Lower lobe of right lung (tissue), 2 donors: ENCODE measurements at regions of chr16 and their contacts with region 1.

Region 1: DNA sequence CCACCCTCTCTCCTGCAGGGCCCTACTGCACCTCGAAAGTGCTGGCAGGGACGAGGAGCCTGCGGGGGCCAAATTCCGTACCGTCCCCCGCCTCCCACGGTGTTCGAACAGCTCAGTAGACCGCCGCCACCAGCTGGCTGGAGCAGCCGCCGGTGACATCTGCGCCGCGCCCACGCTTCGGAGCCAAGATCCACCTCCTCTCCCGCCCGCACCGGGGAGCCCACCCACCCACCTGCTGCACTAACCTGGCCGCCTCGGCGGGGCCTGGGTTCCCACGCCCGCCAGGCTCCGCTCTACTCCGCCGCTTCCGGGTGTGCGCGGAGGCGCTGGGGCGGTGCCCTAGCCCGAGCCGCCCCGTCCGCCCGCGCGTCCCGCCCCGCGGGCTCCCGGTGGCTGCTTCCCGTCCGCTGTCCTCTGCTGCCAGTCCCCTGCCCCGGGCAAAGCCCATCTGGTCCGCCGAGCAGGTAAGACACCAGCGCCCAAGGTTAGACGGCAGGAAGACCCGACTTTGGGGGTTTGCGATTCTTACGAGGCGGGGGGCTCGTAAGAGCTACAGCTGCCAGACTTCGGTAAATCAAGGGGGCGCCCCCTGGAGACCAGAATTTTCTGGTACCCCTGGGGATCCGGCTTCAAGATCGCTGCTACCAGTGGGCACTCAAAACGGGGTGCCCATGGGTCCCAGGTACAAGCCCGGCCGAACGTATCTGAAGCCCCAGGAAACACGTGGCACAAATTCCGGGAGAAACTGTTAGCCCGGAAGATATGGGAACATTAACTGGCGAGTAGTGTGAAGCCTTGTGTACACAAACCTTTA is at the starts of genes FBXL8 and TRADD:
- DNase-seq: peak; percentile 89
- ATAC-seq: peak; percentile 87 to 89
- H3K4me3 ChIP-seq: peak within 1 kb of the TSS; percentile 94
- H3K27ac ChIP-seq: peak within 1 kb of the TSS; percentile 87
- H3K4me1 ChIP-seq: peaks cover 58% of the 10 kb centered on the region
- H3K27me3 ChIP-seq: peaks cover 21% of the 10 kb centered on the region
- CTCF ChIP-seq: no peak
- total RNA-seq, gene FBXL8: 32.9 TPM
- total RNA-seq, gene TRADD: 28.4 TPM

Region 2: GRCh38 chr16:66798161-66798560 is 361.6 kb before region 1 on chr16:
- intact Hi-C with region 1: no loop called
- DNase-seq: no peak
- ATAC-seq: no peak
- H3K4me3 ChIP-seq: no peak overlapping the region
- H3K27ac ChIP-seq: no peak overlapping the region
- H3K4me1 ChIP-seq: no peaks in the 10 kb centered on the region
- H3K27me3 ChIP-seq: no peaks in the 10 kb centered on the region
- CTCF ChIP-seq: no peak

Region 3: DNA sequence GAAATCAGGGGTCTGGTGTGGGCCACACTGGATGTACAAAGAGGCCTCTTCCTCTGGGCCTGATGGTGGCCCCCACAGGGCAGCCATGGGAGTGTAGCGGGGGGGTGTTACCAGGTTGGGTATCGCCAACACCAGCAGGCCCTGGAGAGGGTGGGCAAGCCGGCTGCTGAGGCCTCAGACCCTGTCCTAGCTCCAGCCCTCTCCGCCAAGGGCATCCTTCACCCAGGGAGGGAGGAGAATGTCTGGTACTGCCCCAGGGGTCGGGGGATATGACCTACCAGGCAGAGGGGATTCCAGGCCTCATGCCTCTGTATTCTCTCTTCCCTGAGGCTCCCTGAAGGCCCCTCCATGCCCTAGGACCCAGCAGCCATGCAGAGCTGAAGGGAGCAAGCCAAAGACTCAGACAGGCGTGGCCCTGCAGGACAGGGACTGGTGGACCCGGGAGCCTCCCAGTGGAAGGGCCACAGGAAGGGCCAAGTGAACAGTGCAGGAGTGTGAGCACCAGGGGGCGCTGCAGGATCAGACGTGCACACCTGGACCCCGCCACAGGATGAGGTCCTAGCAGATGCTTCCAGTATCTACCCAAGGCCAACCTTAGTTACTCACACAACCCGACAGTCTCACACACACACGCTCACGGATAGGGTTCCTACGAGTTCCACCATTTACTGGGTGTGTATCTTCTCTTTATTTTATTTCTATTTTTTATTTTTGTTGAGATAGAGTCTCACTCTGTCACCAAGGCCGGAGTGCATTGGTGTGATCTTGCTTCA is 182.3 kb before region 1 on chr16:
- intact Hi-C with region 1: loop called (anchors 10 kb)
- DNase-seq: peak; percentile 92
- ATAC-seq: peak; percentile 94 to 95
- H3K4me3 ChIP-seq: no peak overlapping the region
- H3K27ac ChIP-seq: no peak overlapping the region
- H3K4me1 ChIP-seq: peaks cover 12% of the 10 kb centered on the region
- H3K27me3 ChIP-seq: no peaks in the 10 kb centered on the region
- CTCF ChIP-seq: peak; percentile 98